Natural killer cell (primary cell): ENCODE measurements at regions of chr3 and their contacts with region 1.

Region 1: DNA sequence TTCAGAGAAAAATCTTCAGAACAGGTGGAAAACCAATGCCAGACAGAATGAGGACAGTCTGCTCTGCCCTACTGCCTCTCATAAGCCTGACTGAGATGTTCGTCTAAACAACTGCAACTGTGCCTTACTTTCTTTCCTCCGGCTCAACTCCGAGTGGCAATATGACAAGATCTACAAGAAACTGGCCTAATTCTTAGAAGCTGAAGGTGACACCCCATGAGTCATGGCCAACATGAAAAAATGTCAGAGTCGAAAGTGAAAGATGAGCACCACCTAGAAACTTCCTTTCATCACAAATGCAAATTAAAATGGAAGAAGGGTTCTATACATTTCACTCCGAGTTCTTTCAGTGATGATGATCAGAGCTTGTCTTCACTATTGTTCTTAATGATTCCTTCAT is 12.9 kb downstream of the PCYT1A start:
- DNase-seq: peak; percentile 43 to 85
- ATAC-seq: peak; percentile 92 to 98 (median 93)
- H3K4me3 ChIP-seq: peak overlapping the region; percentile 18
- H3K4me3 Mint-ChIP-seq: peak overlapping the region; percentile 91
- H3K27ac ChIP-seq: peak overlapping the region; percentile 94
- H3K27ac Mint-ChIP-seq: peak overlapping the region; percentile 94 to 96
- H3K4me1 ChIP-seq: peaks cover 23% of the 10 kb centered on the region
- H3K4me1 Mint-ChIP-seq: peaks cover 41 to 50% of the 10 kb centered on the region in 2 donors
- H3K27me3 ChIP-seq: no peaks in the 10 kb centered on the region
- H3K27me3 Mint-ChIP-seq: no peaks in the 10 kb centered on the region
- CTCF ChIP-seq: no peak

Region 2: GRCh38 chr3:196287440-196288148 is 13.0 kb after region 1 on chr3 and contains the start of gene PCYT1A:
- intact Hi-C with region 1: loop called (anchors 1 kb)
- DNase-seq: peak; percentile 65 to 88
- ATAC-seq: peak; percentile 82 to 89 (median 85)
- H3K4me3 ChIP-seq: peak within 1 kb of the TSS; percentile 62
- H3K4me3 Mint-ChIP-seq: peak within 1 kb of the TSS; percentile 100
- H3K27ac ChIP-seq: peak within 1 kb of the TSS; percentile 78
- H3K27ac Mint-ChIP-seq: peak within 1 kb of the TSS; percentile 100
- H3K4me1 ChIP-seq: peaks cover 19% of the 10 kb centered on the region
- H3K4me1 Mint-ChIP-seq: peaks cover 39 to 45% of the 10 kb centered on the region in 2 donors
- H3K27me3 ChIP-seq: no peaks in the 10 kb centered on the region
- H3K27me3 Mint-ChIP-seq: no peaks in the 10 kb centered on the region
- CTCF ChIP-seq: no peak
- total RNA-seq, gene PCYT1A: 105 to 123 (median 110) TPM

Region 3: DNA sequence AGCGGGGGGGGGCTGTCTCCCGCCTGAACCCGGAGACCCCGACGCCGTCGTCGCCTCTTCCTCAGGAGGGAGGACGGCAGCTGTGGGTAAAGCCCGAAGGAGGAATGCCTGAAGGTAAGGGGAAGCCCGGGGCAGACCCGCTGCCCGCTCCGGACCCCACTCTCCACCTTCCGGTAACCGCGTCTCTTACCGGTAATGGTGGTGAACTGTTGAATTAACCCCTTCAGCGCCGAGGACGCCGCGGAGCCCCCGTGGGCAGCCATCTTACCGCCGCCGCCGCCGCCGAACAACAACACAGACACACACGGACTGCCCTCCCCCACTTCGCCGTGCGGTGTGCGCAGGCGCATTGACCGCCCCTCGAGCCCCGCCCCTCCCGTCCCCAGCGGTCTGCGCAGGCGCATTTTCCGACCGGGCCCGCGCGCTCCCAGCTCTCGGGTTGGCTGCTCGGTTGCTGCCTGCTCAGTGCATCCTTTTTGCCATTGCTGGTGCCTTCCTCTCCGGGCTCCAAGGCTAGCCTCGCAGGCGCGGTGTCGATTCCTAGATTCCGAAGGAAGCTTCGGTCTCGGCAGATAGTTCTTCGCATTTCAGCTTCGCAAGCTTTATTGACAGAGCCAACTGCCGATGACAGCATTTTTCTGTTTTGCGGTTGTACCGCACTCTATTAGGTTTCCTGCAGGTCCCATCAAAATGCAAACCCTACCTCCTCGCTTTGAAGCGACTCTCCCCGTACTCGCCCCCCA is 157.7 kb after region 1 on chr3 and contains the start of gene UBXN7:
- intact Hi-C with region 1: loop called (anchors 1 kb)
- DNase-seq: peak; percentile 94 to 98
- ATAC-seq: peak; percentile 87 to 96 (median 93)
- H3K4me3 ChIP-seq: peak within 1 kb of the TSS; percentile 86
- H3K4me3 Mint-ChIP-seq: peak within 1 kb of the TSS; percentile 97
- H3K27ac ChIP-seq: peak within 1 kb of the TSS; percentile 81
- H3K27ac Mint-ChIP-seq: peak within 1 kb of the TSS; percentile 94 to 96
- H3K4me1 ChIP-seq: peaks cover 11% of the 10 kb centered on the region
- H3K4me1 Mint-ChIP-seq: peaks cover 21 to 27% of the 10 kb centered on the region in 2 donors
- H3K27me3 ChIP-seq: no peaks in the 10 kb centered on the region
- H3K27me3 Mint-ChIP-seq: no peaks in the 10 kb centered on the region
- CTCF ChIP-seq: no peak
- total RNA-seq, gene UBXN7: 82.0 to 97.2 (median 82.4) TPM